ENCODE measurements at regions of chr6 and their contacts with region 1.

Region 1: GRCh38 chr6:137697267-137697938 is 169.7 kb upstream of the TNFAIP3 start:
- DNase-seq: no peak
- H3K4me3 Mint-ChIP-seq: no peak overlapping the region
- H3K27ac Mint-ChIP-seq: no peak overlapping the region
- H3K4me1 Mint-ChIP-seq: peaks cover 39% of the 10 kb centered on the region
- H3K27me3 Mint-ChIP-seq: peaks cover 15% of the 10 kb centered on the region

Region 2: GRCh38 chr6:137581019-137581707 is 116.2 kb before region 1 on chr6:
- CTCF ChIA-PET with region 1: no interaction called
- DNase-seq: no peak
- H3K4me3 Mint-ChIP-seq: no peak overlapping the region
- H3K27ac Mint-ChIP-seq: no peak overlapping the region
- H3K4me1 Mint-ChIP-seq: no peaks in the 10 kb centered on the region
- H3K27me3 Mint-ChIP-seq: peaks cover 21% of the 10 kb centered on the region

Region 3: DNA sequence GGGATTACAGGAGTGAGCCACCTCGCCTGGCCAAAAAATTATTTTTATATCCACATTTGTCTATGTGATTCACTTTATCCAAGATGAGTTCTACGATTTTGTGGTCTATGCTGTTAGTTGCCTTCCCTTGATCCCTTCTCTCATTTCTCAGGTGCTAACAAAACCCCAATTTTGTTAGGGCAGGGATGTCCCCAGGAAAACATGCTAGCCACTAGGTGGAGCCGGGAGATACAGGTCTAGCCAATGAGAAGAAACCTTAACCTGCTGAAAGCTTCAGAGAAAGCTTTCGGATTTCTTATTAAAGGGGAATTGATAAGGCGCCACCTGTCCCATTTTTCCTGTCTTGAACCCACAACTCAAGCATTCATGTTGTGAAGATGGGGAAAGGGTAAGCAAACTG is 35.8 kb before region 1 on chr6:
- CTCF ChIA-PET with region 1: interaction called, 41 read pairs
- DNase-seq: peak; percentile 57
- H3K4me3 Mint-ChIP-seq: no peak overlapping the region
- H3K27ac Mint-ChIP-seq: no peak overlapping the region
- H3K4me1 Mint-ChIP-seq: peaks cover 22% of the 10 kb centered on the region
- H3K27me3 Mint-ChIP-seq: peaks cover 6% of the 10 kb centered on the region

Region 4: GRCh38 chr6:137685798-137686375 is 11.5 kb before region 1 on chr6:
- CTCF ChIA-PET with region 1: interaction called, 11 read pairs
- DNase-seq: no peak
- H3K4me3 Mint-ChIP-seq: no peak overlapping the region
- H3K27ac Mint-ChIP-seq: no peak overlapping the region
- H3K4me1 Mint-ChIP-seq: peaks cover 18% of the 10 kb centered on the region
- H3K27me3 Mint-ChIP-seq: peaks cover 4% of the 10 kb centered on the region